Heart left ventricle (tissue), 16 donors: ENCODE measurements at regions of chr3 and their contacts with region 1.

Region 1: GRCh38 chr3:140863580-140864009 is 78.0 kb upstream of the SLC25A36 start:
- DNase-seq: peak in 3 of 5 donors; percentile 27 to 38 (median 35)
- ATAC-seq: peak in 2 of 4 donors; percentile 30 to 49
- H3K4me3 ChIP-seq: no peak overlapping the region
- H3K27ac ChIP-seq: no peak overlapping the region
- H3K4me1 ChIP-seq: no peaks in the 10 kb centered on the region
- H3K27me3 ChIP-seq: peaks cover 0 to 3% (median 0%) of the 10 kb centered on the region in 9 donors
- CTCF ChIP-seq: peak; percentile 37 to 67 (median 52)
- POLR2A ChIP-seq: no peak

Region 2: DNA sequence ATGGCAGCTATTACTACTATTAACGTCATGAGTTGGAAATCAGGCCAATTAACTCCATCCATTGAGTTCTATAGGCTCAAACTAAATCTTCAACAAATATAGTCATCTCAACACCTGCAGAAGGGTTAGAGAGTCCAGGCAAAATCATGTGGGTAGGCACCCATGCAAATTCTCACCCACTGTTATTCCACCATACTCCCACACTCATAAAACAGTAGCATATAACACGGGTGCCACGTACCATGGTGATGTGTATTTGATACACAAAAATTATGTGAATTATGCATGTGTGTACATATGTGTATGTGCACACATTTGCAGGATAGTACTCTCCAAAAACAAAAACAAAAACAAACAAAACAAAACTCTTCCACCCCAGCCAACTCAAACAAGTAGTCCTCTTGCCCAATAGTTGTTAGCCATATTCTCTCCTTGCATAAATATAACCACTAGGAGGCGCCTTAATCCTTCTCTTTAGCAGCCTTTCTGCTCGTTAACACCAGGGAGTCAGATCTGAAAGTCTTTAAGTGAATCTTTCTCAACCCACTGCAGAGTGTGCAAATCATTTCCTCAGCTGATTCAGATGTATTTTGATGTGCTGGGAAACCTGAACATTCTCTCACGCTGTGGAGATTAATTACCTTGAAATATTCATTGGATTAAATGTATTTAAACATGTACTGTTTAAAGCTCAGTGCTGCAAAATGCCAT is 1436.2 kb before region 1 on chr3:
- intact Hi-C with region 1: loop called in 4 of 10 experiments (anchors 5 to 10 kb)
- DNase-seq: no peak
- ATAC-seq: peak; percentile 64 to 90 (median 82)
- H3K4me3 ChIP-seq: no peak overlapping the region
- H3K27ac ChIP-seq: no peak overlapping the region
- H3K4me1 ChIP-seq: peaks cover 0 to 5% (median 0%) of the 10 kb centered on the region in 12 donors
- H3K27me3 ChIP-seq: no peaks in the 10 kb centered on the region
- CTCF ChIP-seq: peak; percentile 71 to 88 (median 85)
- POLR2A ChIP-seq: no peak

Region 3: DNA sequence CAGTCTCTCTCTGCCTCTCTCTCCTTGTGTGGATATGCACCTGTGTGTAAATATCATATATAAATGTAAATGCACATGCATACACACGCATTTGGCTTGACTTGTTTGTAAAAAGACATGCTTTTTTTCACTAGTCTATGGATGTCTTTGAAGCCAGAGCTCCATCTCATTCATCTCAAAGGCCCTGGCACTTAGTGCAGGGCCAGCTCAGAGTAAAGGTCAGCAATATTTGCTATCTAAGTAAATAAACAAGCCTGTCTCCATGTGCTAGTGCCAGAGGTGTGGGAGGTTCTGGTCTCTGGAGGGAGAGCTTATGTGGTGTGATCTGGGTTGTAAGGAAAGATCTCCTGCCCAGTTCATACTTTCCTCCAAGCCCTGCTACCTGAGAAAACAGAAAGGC is 923.0 kb before region 1 on chr3:
- intact Hi-C with region 1: loop called in 3 of 10 experiments (anchors 5 to 10 kb)
- DNase-seq: peak in 2 of 5 donors; percentile 39 to 52
- ATAC-seq: peak; percentile 70 to 90 (median 81)
- H3K4me3 ChIP-seq: no peak overlapping the region
- H3K27ac ChIP-seq: no peak overlapping the region
- H3K4me1 ChIP-seq: peaks cover 0 to 29% (median 7%) of the 10 kb centered on the region in 12 donors
- H3K27me3 ChIP-seq: peaks cover 0 to 28% (median 4%) of the 10 kb centered on the region in 9 donors
- CTCF ChIP-seq: no peak
- POLR2A ChIP-seq: no peak

Region 4: DNA sequence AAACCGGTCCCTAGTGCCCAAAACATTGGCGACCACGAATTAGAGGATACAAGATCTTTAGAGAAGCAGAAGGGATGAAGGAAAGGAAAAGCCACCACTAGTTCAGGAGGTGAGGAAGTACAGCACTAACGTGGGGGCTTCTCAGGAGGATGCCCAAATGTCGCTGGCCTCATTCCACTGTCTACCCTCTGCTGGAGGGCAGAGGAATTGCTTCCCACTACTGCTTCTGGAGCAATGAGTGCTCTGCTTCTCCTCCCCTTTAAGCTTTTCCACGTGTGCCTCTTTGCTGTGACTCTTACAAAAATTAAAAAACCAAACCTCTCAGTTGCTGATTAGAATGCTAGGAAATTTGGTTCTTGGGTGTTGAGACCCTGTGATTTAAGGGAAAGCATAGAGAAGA is 647.3 kb before region 1 on chr3:
- intact Hi-C with region 1: loop called in 1 of 10 experiments (anchors 10 kb)
- DNase-seq: no peak
- ATAC-seq: peak in 1 of 4 donors; percentile 46
- H3K4me3 ChIP-seq: no peak overlapping the region
- H3K27ac ChIP-seq: no peak overlapping the region
- H3K4me1 ChIP-seq: no peaks in the 10 kb centered on the region
- H3K27me3 ChIP-seq: no peaks in the 10 kb centered on the region
- CTCF ChIP-seq: peak in 11 of 12 donors; percentile 9 to 50 (median 39)
- POLR2A ChIP-seq: no peak

Region 5: DNA sequence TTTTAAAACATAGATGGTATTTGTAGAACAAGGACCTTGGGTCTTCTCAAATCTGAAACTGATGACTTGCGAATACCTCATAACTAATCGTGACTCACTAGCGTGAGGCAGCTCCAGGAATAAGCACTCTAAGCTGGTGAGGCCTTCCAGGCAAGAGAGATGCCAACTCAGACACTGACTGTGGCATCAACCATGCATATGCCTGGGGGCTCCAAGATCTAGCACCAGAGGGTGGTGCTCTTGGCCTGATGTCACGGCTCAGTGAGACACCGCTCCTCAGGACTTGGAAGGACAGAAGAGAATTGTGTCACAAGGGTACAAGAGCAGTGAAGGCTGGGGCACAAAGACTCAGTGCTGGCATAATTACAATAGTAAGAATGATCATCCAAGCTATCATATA is 310.7 kb before region 1 on chr3:
- intact Hi-C with region 1: loop called in 2 of 10 experiments (anchors 5 to 10 kb)
- DNase-seq: peak in 1 of 5 donors; percentile 36
- ATAC-seq: peak; percentile 55 to 72 (median 67)
- H3K4me3 ChIP-seq: no peak overlapping the region
- H3K27ac ChIP-seq: no peak overlapping the region
- H3K4me1 ChIP-seq: no peaks in the 10 kb centered on the region
- H3K27me3 ChIP-seq: no peaks in the 10 kb centered on the region
- CTCF ChIP-seq: peak in 8 of 12 donors; percentile 9 to 33 (median 22)
- POLR2A ChIP-seq: no peak

Region 6: GRCh38 chr3:140816372-140817195 is 47.0 kb before region 1 on chr3:
- intact Hi-C with region 1: no loop called
- DNase-seq: no peak
- ATAC-seq: no peak
- H3K4me3 ChIP-seq: no peak overlapping the region
- H3K27ac ChIP-seq: no peak overlapping the region
- H3K4me1 ChIP-seq: no peaks in the 10 kb centered on the region
- H3K27me3 ChIP-seq: peaks cover 0 to 3% (median 0%) of the 10 kb centered on the region in 9 donors
- CTCF ChIP-seq: no peak
- POLR2A ChIP-seq: no peak

Region 7: DNA sequence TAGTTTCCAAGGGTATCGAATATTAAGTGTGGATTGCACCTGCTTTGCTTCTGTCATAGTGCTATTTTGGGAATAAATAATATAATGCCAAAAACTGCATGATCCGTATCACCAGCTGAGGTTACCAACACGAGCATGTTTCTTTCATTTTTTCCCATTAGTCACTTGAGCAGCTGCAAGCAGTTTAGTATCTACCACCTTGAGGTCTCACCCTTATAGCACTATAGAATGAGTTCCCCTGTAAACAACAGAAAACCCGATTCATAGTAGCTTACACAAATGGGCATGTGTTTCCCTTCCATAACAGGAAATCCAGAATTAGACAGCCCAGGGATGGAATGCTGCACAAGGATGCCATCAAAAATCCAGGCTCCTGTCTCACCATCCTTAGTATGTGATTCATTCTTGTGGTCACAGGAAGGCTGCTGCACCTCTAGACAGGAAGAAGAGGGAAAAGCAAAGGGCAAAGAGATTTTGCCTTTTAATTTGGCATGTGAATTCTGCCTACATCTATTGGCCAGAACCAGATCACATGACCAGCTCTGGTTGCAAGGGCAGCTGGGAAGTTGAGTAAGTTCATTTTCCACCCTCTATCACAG is 13.3 kb before region 1 on chr3:
- intact Hi-C with region 1: no loop called
- DNase-seq: no peak
- ATAC-seq: no peak
- H3K4me3 ChIP-seq: no peak overlapping the region
- H3K27ac ChIP-seq: no peak overlapping the region
- H3K4me1 ChIP-seq: no peaks in the 10 kb centered on the region
- H3K27me3 ChIP-seq: peaks cover 0 to 25% (median 0%) of the 10 kb centered on the region in 9 donors
- CTCF ChIP-seq: no peak
- POLR2A ChIP-seq: no peak